ENCODE measurements at regions of chr7 and their contacts with region 1.

Region 1: GRCh38 chr7:26200444-26201246 is at the start of gene HNRNPA2B1:
- DNase-seq: peak; percentile 95
- ATAC-seq: peak; percentile 82 to 86
- H3K4me3 ChIP-seq: peak within 1 kb of the TSS; percentile 79 to 98 (median 94)
- H3K27ac ChIP-seq: peak within 1 kb of the TSS; percentile 97 to 100 (median 98)
- H3K4me1 ChIP-seq: peaks cover 39 to 50% of the 10 kb centered on the region in 2 donors
- H3K27me3 ChIP-seq: no peaks in the 10 kb centered on the region
- CTCF ChIP-seq: peak in 1 of 5 experiments; percentile 15
- POLR2A ChIP-seq: peak; percentile 100
- total RNA-seq, gene HNRNPA2B1: 155 to 242 (median 166) TPM

Region 2: DNA sequence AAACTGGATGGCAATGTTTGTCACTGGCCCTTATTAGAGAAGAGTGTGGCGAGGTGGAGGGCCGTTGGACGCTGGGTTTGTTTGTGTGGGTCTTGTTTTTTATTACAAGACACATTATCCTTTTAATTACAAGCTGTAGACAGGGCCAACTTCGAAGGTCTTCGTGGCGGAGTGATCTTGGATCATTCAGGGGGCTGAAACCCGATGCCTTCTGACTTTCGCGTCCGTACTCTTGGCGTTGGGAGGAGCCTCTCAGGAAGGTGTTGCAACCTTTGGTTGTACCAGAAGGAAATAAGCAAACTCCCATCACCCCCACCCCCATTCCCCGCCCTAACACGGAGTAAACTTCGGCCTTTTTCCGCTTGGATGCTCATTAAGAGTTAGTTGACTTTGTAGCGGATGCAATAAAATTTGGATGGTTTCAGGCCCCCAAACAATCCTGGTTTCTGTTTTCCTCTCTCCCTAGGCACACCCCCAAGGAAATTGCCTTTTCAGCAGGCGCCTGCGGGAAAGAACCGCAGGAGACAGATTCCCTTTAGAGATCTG is 343.2 kb before region 1 on chr7:
- in situ Hi-C with region 1: loop called in 3 of 4 experiments (anchors 10 to 25 kb)
- intact Hi-C with region 1: loop called (anchors 2 kb)
- DNase-seq: peak; percentile 73 to 86
- ATAC-seq: peak; percentile 43 to 48
- H3K4me3 ChIP-seq: peak overlapping the region; percentile 43 to 65 (median 58)
- H3K27ac ChIP-seq: peak overlapping the region; percentile 94 to 95 (median 94)
- H3K4me1 ChIP-seq: peaks cover 11 to 14% of the 10 kb centered on the region in 2 donors
- H3K27me3 ChIP-seq: peaks cover 0 to 12% (median 8%) of the 10 kb centered on the region in 3 donors
- CTCF ChIP-seq: no peak
- POLR2A ChIP-seq: no peak

Region 3: GRCh38 chr7:25894902-25895791 is 305.5 kb before region 1 on chr7:
- in situ Hi-C with region 1: loop called in 1 of 4 experiments (anchors 25 kb)
- intact Hi-C with region 1: loop called (anchors 5 kb)
- DNase-seq: peak; percentile 21 to 61
- ATAC-seq: peak; percentile 67 to 73
- H3K4me3 ChIP-seq: peak overlapping the region; percentile 38 to 62 (median 47)
- H3K27ac ChIP-seq: peak overlapping the region; percentile 26 to 61 (median 54)
- H3K4me1 ChIP-seq: peaks cover 7 to 9% of the 10 kb centered on the region in 2 donors
- H3K27me3 ChIP-seq: no peaks in the 10 kb centered on the region
- CTCF ChIP-seq: peak; percentile 50 to 84 (median 72)
- POLR2A ChIP-seq: no peak

Region 4: DNA sequence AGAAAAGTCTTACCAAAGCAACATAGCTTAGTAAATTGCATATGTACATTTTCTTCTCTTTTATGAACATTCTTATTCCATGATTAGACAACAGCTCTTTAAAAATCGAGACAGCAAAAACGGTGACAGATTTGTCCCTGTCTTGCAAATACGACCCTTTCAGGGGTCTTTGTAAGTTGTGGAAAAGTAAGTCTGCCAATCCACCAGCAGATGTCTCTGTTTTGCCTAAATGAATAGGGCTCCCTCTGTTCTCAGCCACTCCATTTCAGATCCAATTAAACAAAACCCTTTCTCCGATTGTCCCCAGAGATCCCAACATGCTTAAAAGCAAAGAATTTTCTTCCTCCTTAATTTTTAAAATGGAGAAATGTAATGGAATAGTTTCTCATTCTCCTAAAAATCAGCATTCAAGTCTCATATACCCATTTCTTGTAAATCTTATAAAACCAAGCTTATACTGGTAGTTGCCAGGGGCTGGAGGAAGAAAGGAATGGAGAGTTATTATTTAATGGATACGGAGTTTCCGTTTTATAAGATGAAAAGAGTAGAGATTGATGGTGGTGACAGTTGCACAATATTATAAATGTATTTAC is 109.6 kb before region 1 on chr7:
- in situ Hi-C with region 1: loop called in 1 of 4 experiments (anchors 10 kb)
- intact Hi-C with region 1: loop called (anchors 10 kb)
- DNase-seq: no peak
- ATAC-seq: no peak
- H3K4me3 ChIP-seq: no peak overlapping the region
- H3K27ac ChIP-seq: no peak overlapping the region
- H3K4me1 ChIP-seq: no peaks in the 10 kb centered on the region
- H3K27me3 ChIP-seq: no peaks in the 10 kb centered on the region
- CTCF ChIP-seq: peak; percentile 33 to 58 (median 50)
- POLR2A ChIP-seq: no peak

Region 5: DNA sequence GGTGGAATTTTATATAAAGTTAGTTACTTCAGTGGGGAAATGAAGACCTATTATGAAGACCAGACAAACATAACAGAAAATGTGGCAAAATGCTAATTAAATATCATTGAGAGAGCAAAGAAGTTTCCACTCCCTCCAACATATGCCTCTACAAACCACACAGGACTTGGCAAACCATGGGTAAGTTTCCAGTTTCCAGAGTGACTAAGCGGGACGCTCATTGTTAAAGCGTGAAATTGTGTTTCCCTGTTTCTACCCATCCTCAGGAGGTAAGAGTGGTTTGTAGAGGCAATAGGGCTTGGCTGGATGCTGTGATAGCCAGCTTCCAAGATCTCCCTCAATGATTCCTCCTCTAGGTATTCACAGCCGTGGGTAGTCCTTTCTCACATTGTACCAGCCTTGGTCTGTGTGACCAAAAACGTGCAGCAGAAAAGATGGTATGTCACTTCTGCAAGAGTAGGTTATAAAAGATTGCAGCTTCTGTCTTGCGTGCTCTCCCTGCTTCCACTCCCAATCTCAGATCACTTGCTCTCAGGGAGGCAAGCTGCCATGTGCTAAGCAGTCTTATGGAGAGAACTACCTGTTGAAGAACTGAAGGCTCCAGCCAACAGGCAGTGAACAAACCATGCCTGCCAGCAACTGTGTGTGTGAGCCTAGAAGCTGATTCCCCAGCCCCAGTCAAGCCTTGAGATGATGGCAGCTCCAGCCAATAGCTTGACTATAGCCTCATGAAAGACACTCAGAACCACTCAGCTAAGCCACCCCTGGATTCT is 36.6 kb after region 1 on chr7:
- in situ Hi-C with region 1: no loop called
- intact Hi-C with region 1: no loop called
- DNase-seq: no peak
- ATAC-seq: no peak
- H3K4me3 ChIP-seq: no peak overlapping the region
- H3K27ac ChIP-seq: no peak overlapping the region
- H3K4me1 ChIP-seq: no peaks in the 10 kb centered on the region
- H3K27me3 ChIP-seq: no peaks in the 10 kb centered on the region
- CTCF ChIP-seq: no peak
- POLR2A ChIP-seq: no peak

Region 6: DNA sequence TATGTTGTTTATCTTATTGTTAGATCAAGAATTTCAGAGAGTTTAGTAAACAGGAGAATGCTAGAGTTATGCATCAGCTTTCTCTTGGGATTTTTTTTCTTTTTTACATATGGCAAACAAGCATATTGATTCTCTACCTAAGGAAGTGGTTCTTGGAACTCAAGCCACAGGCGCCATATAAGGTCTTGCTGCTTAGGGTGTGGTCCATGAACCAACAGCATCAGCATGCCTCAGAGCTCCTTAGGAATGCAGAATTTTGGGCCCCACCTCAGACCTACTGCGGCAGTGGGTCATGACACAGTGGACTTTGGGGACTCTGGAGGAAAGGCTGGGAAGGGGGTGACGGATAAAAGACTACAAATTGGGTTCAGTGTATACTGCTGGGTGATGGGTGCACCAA is 432.9 kb after region 1 on chr7:
- in situ Hi-C with region 1: no loop called
- intact Hi-C with region 1: no loop called
- DNase-seq: no peak
- ATAC-seq: no peak
- H3K4me3 ChIP-seq: no peak overlapping the region
- H3K27ac ChIP-seq: no peak overlapping the region
- H3K4me1 ChIP-seq: no peaks in the 10 kb centered on the region
- H3K27me3 ChIP-seq: no peaks in the 10 kb centered on the region
- CTCF ChIP-seq: no peak
- POLR2A ChIP-seq: no peak

Region 7: GRCh38 chr7:27160546-27161213 is 960.0 kb after region 1 on chr7:
- in situ Hi-C with region 1: loop called in 1 of 4 experiments (anchors 25 kb)
- intact Hi-C with region 1: loop called (anchors 2 kb)
- DNase-seq: peak in 1 of 2 donors; percentile 85
- ATAC-seq: peak; percentile 32 to 47
- H3K4me3 ChIP-seq: peak overlapping the region; percentile 60 to 80 (median 72)
- H3K27ac ChIP-seq: peak overlapping the region; percentile 65 to 88 (median 81)
- H3K4me1 ChIP-seq: peaks cover 12 to 23% of the 10 kb centered on the region in 2 donors
- H3K27me3 ChIP-seq: no peaks in the 10 kb centered on the region
- CTCF ChIP-seq: peak; percentile 99 to 100 (median 100)
- POLR2A ChIP-seq: no peak